Right ventricle myocardium inferior (tissue), 1 donor: ENCODE measurements at regions of chr7 and their contacts with region 1.

Region 1: DNA sequence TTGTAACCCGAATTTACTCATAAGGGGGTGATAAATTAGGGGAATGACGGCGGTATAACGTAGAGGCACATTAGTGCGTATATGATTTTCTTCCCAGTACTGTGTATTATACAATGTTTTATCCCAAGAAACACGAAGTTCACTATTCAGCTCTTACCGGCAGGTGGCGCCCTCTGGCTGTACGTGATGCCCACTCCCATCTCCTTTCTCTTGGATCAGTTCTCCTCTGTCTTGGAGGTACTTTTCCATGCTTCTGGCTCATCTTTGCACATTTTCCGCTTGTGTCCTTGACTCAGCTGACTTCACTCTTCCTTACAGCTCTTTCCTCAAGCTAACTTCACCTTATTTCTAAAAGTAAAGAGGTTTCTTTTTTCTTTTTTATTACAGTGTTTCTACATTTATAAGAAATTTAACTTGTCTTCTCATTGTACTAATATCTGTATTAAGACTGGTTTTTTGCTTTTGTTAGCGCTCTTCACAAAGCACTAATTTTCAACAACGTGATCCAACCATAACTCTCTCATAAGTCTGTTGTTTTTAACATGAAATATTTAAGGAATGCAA is 21.3 kb downstream of the TMEM176B start:
- DNase-seq: peak; percentile 90
- ATAC-seq: peak; percentile 81

Region 2: GRCh38 chr7:150876817-150877526 is 98.2 kb after region 1 on chr7:
- intact Hi-C with region 1: loop called (anchors 1 kb)
- DNase-seq: no peak
- ATAC-seq: peak; percentile 91

Region 3: GRCh38 chr7:150988230-150989226 is 209.7 kb after region 1 on chr7:
- intact Hi-C with region 1: loop called (anchors 5 kb)
- DNase-seq: peak; percentile 78
- ATAC-seq: peak; percentile 47

Region 4: GRCh38 chr7:151008511-151009323 is 229.9 kb after region 1 on chr7:
- intact Hi-C with region 1: loop called (anchors 5 kb)
- DNase-seq: peak; percentile 77
- ATAC-seq: peak; percentile 81

Region 5: GRCh38 chr7:151181011-151181431 is 402.2 kb after region 1 on chr7:
- intact Hi-C with region 1: no loop called
- DNase-seq: peak; percentile 60
- ATAC-seq: no peak